ENCODE measurements at regions of chr20 and their contacts with region 1.

Region 1: GRCh38 chr20:47501483-47502270 is at the start of gene NCOA3:
- DNase-seq: peak; percentile 98
- ATAC-seq: peak; percentile 98
- H3K4me3 Mint-ChIP-seq: peak within 1 kb of the TSS; percentile 93
- H3K27ac Mint-ChIP-seq: peak within 1 kb of the TSS; percentile 92
- H3K4me1 Mint-ChIP-seq: peaks cover 41% of the 10 kb centered on the region
- H3K27me3 Mint-ChIP-seq: no peaks in the 10 kb centered on the region
- CTCF ChIP-seq: no peak
- total RNA-seq, gene NCOA3: 20.2 to 25.2 TPM (median 21.5 TPM) in 3 replicates

Region 2: GRCh38 chr20:47418061-47418912 is 83.4 kb before region 1 on chr20:
- CTCF ChIA-PET with region 1: no interaction called
- POLR2A ChIA-PET with region 1: no interaction called
- DNase-seq: no peak
- ATAC-seq: no peak
- H3K4me3 Mint-ChIP-seq: no peak overlapping the region
- H3K27ac Mint-ChIP-seq: no peak overlapping the region
- H3K4me1 Mint-ChIP-seq: peaks cover 8% of the 10 kb centered on the region
- H3K27me3 Mint-ChIP-seq: no peaks in the 10 kb centered on the region; the same call in 1 of the 2 replicates
- CTCF ChIP-seq: no peak

Region 3: GRCh38 chr20:47521059-47521808 is 19.6 kb after region 1 on chr20:
- CTCF ChIA-PET with region 1: interaction called, 11 read pairs
- POLR2A ChIA-PET with region 1: interaction called, 6 read pairs
- DNase-seq: peak; percentile 72
- ATAC-seq: peak; percentile 39
- H3K4me3 Mint-ChIP-seq: no peak overlapping the region
- H3K27ac Mint-ChIP-seq: peak overlapping the region; percentile 64; the same call in 1 of the 2 replicates
- H3K4me1 Mint-ChIP-seq: peaks cover 20% of the 10 kb centered on the region
- H3K27me3 Mint-ChIP-seq: no peaks in the 10 kb centered on the region; the same call in 1 of the 2 replicates
- CTCF ChIP-seq: peak; percentile 65

Region 4: DNA sequence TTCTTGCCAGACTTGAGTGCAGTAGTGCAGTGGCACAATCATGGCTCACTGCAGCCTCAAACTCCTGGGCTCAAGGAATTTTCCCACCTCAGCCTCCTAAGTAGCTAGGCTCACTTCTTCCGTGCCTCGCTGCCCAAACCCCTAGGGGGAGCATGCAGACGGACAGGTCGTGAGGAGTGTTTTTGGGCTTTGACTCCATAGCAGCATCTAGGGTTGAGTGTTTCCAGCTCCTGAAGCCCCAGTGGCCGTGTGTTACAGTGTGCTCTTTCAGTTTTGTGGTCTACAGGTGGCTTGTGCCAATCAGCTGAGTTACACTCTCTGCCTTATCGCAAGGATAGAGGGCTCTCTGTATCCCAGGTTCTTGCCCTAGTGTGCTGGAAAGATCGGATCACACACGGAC is 33.4 kb after region 1 on chr20:
- CTCF ChIA-PET with region 1: interaction called, 10 read pairs
- POLR2A ChIA-PET with region 1: interaction called, 3 read pairs
- DNase-seq: peak; percentile 77
- ATAC-seq: peak; percentile 99
- H3K4me3 Mint-ChIP-seq: no peak overlapping the region
- H3K27ac Mint-ChIP-seq: peak overlapping the region; percentile 90; the same call in 1 of the 2 replicates
- H3K4me1 Mint-ChIP-seq: peaks cover 22% of the 10 kb centered on the region
- H3K27me3 Mint-ChIP-seq: no peaks in the 10 kb centered on the region
- CTCF ChIP-seq: 0 out of 2 replicates have a peak, but pooled peaks have one; percentile 19

Region 5: GRCh38 chr20:47839200-47839599 is 337.5 kb after region 1 on chr20:
- CTCF ChIA-PET with region 1: no interaction called
- POLR2A ChIA-PET with region 1: no interaction called
- DNase-seq: no peak
- ATAC-seq: no peak
- H3K4me3 Mint-ChIP-seq: no peak overlapping the region
- H3K27ac Mint-ChIP-seq: no peak overlapping the region
- H3K4me1 Mint-ChIP-seq: peaks cover 12% of the 10 kb centered on the region; the same call in 1 of the 2 replicates
- H3K27me3 Mint-ChIP-seq: no peaks in the 10 kb centered on the region
- CTCF ChIP-seq: no peak